Caco-2 (cell line): ENCODE measurements at regions of chr12 and their contacts with region 1.

Region 1: DNA sequence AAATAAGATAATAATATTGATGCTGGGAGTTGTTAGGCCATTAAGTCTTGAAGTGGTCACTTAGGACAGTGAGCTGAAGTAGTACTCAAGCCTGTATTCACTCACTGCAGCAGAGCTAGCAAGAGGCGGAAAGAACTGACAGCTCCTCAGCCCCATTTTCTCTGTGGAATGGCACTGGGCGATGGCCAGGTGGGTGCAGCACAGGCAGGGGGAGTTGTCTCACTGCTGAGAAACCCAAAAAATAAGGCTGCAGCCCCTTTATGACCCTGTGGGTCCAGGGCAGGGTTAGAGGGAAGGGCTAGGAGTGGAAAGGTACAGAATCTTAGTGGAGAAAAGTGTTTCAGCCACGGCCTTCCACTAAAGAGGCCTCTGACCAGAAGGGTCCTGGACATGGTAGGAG is 35.5 kb downstream of the PDZRN4 start:
- DNase-seq: no peak
- H3K4me3 ChIP-seq: no peak overlapping the region
- H3K4me3 Mint-ChIP-seq: no peak overlapping the region
- H3K27ac Mint-ChIP-seq: no peak overlapping the region
- H3K4me1 ChIP-seq: no peaks in the 10 kb centered on the region
- H3K4me1 Mint-ChIP-seq: no peaks in the 10 kb centered on the region
- H3K27me3 ChIP-seq: no peaks in the 10 kb centered on the region
- H3K27me3 Mint-ChIP-seq: peaks cover 4% of the 10 kb centered on the region
- CTCF ChIP-seq: no peak

Region 2: GRCh38 chr12:41162461-41162860 is 61.1 kb before region 1 on chr12:
- CTCF ChIA-PET with region 1: no interaction called
- POLR2A ChIA-PET with region 1: no interaction called
- intact Hi-C with region 1: no loop called
- DNase-seq: no peak
- H3K4me3 ChIP-seq: no peak overlapping the region
- H3K4me3 Mint-ChIP-seq: no peak overlapping the region
- H3K27ac Mint-ChIP-seq: no peak overlapping the region
- H3K4me1 ChIP-seq: no peaks in the 10 kb centered on the region
- H3K4me1 Mint-ChIP-seq: no peaks in the 10 kb centered on the region
- H3K27me3 ChIP-seq: no peaks in the 10 kb centered on the region
- H3K27me3 Mint-ChIP-seq: no peaks in the 10 kb centered on the region
- CTCF ChIP-seq: no peak

Region 3: DNA sequence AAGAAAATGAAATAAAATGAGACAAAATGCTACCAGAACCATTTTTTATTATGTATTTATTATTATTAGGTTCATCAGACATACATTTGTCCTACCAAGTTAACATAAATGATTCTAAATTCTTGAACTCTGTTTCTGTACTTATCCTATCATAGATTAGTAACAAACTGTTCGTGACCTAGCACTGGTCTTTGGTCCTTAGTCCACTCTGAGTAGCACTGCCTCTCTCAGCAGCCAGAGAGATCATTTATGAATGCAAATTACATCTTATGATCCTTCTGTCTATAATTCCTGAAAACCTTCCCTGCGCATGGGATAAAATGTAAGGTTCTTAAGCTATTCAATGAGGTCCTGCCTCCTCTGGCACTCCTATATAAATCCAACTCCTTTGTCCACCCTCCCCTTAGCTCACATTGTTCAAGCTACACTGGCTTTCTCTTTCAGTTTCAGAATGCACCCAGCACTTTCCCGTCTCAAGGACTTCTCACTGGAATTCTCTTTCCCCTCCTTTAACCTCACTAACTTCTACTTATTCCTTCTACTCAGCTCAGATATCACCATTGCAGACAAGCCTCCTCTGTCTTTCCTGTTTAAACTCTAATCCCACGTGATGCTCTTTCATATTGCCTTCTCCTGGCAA is 18.4 kb before region 1 on chr12:
- CTCF ChIA-PET with region 1: no interaction called
- POLR2A ChIA-PET with region 1: no interaction called
- intact Hi-C with region 1: no loop called
- DNase-seq: no peak
- H3K4me3 ChIP-seq: no peak overlapping the region
- H3K4me3 Mint-ChIP-seq: no peak overlapping the region
- H3K27ac Mint-ChIP-seq: no peak overlapping the region
- H3K4me1 ChIP-seq: no peaks in the 10 kb centered on the region
- H3K4me1 Mint-ChIP-seq: no peaks in the 10 kb centered on the region
- H3K27me3 ChIP-seq: no peaks in the 10 kb centered on the region
- H3K27me3 Mint-ChIP-seq: no peaks in the 10 kb centered on the region
- CTCF ChIP-seq: no peak

Region 4: GRCh38 chr12:41242603-41243002 is 19.0 kb after region 1 on chr12:
- CTCF ChIA-PET with region 1: no interaction called
- POLR2A ChIA-PET with region 1: no interaction called
- intact Hi-C with region 1: loop called (anchors 2 kb)
- DNase-seq: no peak
- H3K4me3 ChIP-seq: no peak overlapping the region
- H3K4me3 Mint-ChIP-seq: no peak overlapping the region
- H3K27ac Mint-ChIP-seq: no peak overlapping the region
- H3K4me1 ChIP-seq: no peaks in the 10 kb centered on the region
- H3K4me1 Mint-ChIP-seq: no peaks in the 10 kb centered on the region
- H3K27me3 ChIP-seq: no peaks in the 10 kb centered on the region
- H3K27me3 Mint-ChIP-seq: peaks cover 4% of the 10 kb centered on the region
- CTCF ChIP-seq: no peak